Heart right ventricle (tissue), 16 donors: ENCODE measurements at regions of chr15 and their contacts with region 1.

Region 1: DNA sequence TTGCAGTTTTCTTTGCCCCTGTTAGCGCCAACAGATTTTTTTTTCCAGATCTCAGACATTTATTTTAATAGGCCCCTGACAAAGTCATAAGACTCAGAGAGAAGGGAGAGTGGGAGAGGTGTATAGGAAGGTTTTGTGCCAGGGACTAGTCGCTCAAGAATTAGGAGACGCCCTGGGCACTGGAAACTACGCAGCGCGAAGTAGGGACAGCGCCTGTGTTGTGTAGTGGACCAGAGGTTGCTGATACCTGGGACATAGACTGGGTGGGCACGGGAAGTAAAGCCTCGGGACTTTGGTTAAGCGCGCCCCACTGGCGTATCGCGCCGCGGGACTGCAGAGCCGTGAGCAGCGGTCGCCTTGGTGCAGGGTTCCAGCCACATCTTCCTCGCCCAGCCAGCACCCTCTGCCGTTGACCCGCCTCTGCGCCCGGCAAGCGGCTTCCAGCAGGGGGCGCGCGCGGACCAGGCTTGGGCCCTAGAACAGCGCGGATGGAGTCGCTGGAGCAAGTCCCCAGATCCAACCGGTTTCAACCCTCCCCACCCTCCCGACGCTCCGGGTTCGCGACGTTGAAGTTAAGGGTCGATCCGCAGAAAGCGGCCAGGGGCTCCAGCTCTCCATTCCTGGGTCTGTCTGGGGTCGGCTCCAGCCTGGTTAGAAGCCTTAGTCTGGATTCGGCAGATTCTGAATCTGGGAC is 3.0 kb upstream of the ISLR2 start:
- DNase-seq: peak; percentile 90 to 92
- ATAC-seq: peak; percentile 93 to 96 (median 95)
- H3K4me3 ChIP-seq: peak overlapping the region in 9 of 10 donors; percentile 33 to 64 (median 55)
- H3K27ac ChIP-seq: peak overlapping the region in 8 of 10 donors; percentile 50 to 89 (median 80)
- H3K4me1 ChIP-seq: peaks cover 3 to 53% (median 40%) of the 10 kb centered on the region in 9 donors
- H3K27me3 ChIP-seq: peaks cover 0 to 90% (median 75%) of the 10 kb centered on the region in 7 donors
- CTCF ChIP-seq: peak; percentile 98 to 100 (median 99)

Region 2: GRCh38 chr15:73950831-73951561 is 176.4 kb before region 1 on chr15:
- intact Hi-C with region 1: no loop called
- DNase-seq: peak; percentile 91 to 96
- ATAC-seq: peak; percentile 90 to 98 (median 96)
- H3K4me3 ChIP-seq: no peak overlapping the region
- H3K27ac ChIP-seq: peak overlapping the region; percentile 87 to 97 (median 92)
- H3K4me1 ChIP-seq: peaks cover 15 to 44% (median 33%) of the 10 kb centered on the region in 9 donors
- H3K27me3 ChIP-seq: no peaks in the 10 kb centered on the region
- CTCF ChIP-seq: peak; percentile 58 to 94 (median 87)

Region 3: DNA sequence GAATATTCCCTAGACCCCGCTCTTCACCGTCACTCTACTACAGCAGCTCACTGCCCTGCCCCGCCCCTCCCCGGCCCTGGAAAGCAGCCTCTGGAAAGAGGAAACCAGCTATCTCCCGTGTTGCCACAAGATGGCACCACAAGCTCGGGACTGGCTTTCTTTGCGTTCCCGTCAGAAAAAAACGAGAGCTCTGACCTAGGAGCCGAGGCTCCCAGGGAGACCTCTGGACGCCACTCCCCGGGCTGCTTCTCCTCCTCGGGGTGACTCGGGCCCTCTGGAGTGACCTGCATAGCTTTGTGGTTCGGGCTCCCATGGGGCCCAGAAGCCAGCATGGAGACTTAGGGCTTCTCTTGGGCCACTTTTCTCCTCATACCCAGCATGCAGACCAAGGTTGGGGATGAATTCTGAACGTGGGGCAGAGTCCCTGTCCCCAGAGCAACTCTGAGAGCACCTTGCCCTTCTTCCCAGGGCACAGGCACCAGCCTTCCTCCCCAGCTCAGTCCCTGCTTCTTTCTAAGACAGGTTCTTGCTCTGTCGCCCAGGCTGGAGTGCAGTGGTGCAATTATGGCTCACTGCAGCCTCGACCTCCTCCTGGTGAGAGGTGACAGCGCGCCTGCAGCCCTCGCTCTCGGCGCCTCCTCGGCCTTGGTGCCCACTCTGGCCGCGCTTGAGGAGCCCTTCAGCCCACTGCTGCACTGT is 154.3 kb before region 1 on chr15:
- intact Hi-C with region 1: loop called in 3 of 10 experiments (anchors 5 to 10 kb)
- DNase-seq: peak; percentile 81 to 88
- ATAC-seq: peak; percentile 87 to 96 (median 93)
- H3K4me3 ChIP-seq: peak overlapping the region in 8 of 10 donors; percentile 6 to 40 (median 32)
- H3K27ac ChIP-seq: peak overlapping the region in 1 of 10 donors; percentile 52
- H3K4me1 ChIP-seq: peaks cover 0 to 17% (median 10%) of the 10 kb centered on the region in 9 donors
- H3K27me3 ChIP-seq: no peaks in the 10 kb centered on the region
- CTCF ChIP-seq: peak; percentile 74 to 88 (median 85)

Region 4: GRCh38 chr15:74179341-74179841 is 52.0 kb after region 1 on chr15:
- intact Hi-C with region 1: loop called in 1 of 10 experiments (anchors 2 kb)
- DNase-seq: peak; percentile 78 to 83
- ATAC-seq: peak; percentile 68 to 94 (median 87)
- H3K4me3 ChIP-seq: peak overlapping the region in 2 of 10 donors; percentile 8 to 16
- H3K27ac ChIP-seq: peak overlapping the region; percentile 41 to 84 (median 76)
- H3K4me1 ChIP-seq: peaks cover 14 to 68% (median 46%) of the 10 kb centered on the region in 9 donors
- H3K27me3 ChIP-seq: no peaks in the 10 kb centered on the region
- CTCF ChIP-seq: no peak

Region 5: GRCh38 chr15:74222240-74223119 is 95.1 kb after region 1 on chr15:
- intact Hi-C with region 1: no loop called
- DNase-seq: no peak
- ATAC-seq: no peak
- H3K4me3 ChIP-seq: no peak overlapping the region
- H3K27ac ChIP-seq: no peak overlapping the region
- H3K4me1 ChIP-seq: peaks cover 0 to 11% (median 0%) of the 10 kb centered on the region in 9 donors
- H3K27me3 ChIP-seq: peaks cover 0 to 15% (median 4%) of the 10 kb centered on the region in 7 donors
- CTCF ChIP-seq: no peak

Region 6: GRCh38 chr15:74302821-74303359 is 175.5 kb after region 1 on chr15:
- intact Hi-C with region 1: loop called (anchors 1 to 5 kb)
- DNase-seq: peak; percentile 38 to 47
- ATAC-seq: peak; percentile 23 to 74 (median 56)
- H3K4me3 ChIP-seq: no peak overlapping the region
- H3K27ac ChIP-seq: no peak overlapping the region
- H3K4me1 ChIP-seq: peaks cover 0 to 11% (median 0%) of the 10 kb centered on the region in 9 donors
- H3K27me3 ChIP-seq: peaks cover 0 to 71% (median 34%) of the 10 kb centered on the region in 7 donors
- CTCF ChIP-seq: peak; percentile 53 to 76 (median 67)

Region 7: GRCh38 chr15:74322181-74323076 is 195.0 kb after region 1 on chr15:
- intact Hi-C with region 1: loop called in 9 of 10 experiments (anchors 1 to 5 kb)
- DNase-seq: peak; percentile 62 to 71
- ATAC-seq: peak in 7 of 8 donors; percentile 17 to 64 (median 54)
- H3K4me3 ChIP-seq: no peak overlapping the region
- H3K27ac ChIP-seq: no peak overlapping the region
- H3K4me1 ChIP-seq: peaks cover 16 to 33% (median 30%) of the 10 kb centered on the region in 9 donors
- H3K27me3 ChIP-seq: peaks cover 0 to 4% (median 0%) of the 10 kb centered on the region in 7 donors
- CTCF ChIP-seq: peak; percentile 80 to 94 (median 87)